CD4-positive, alpha-beta memory T cell (primary cell): ENCODE measurements at regions of chr2 and their contacts with region 1.

Region 1: GRCh38 chr2:168758970-168759820 is 43.2 kb upstream of the NOSTRIN start:
- DNase-seq: peak; percentile 48 to 54 (median 54)
- H3K4me3 ChIP-seq: no peak overlapping the region
- H3K4me3 Mint-ChIP-seq: peak overlapping the region in 1 of 8 donors; percentile 9
- H3K27ac ChIP-seq: no peak overlapping the region
- H3K27ac Mint-ChIP-seq: peak overlapping the region in 2 of 7 donors; percentile 4 to 42
- H3K4me1 ChIP-seq: peaks cover 51% of the 10 kb centered on the region
- H3K4me1 Mint-ChIP-seq: peaks cover 34 to 51% (median 46%) of the 10 kb centered on the region in 4 donors
- H3K27me3 ChIP-seq: no peaks in the 10 kb centered on the region
- H3K27me3 Mint-ChIP-seq: no peaks in the 10 kb centered on the region

Region 2: GRCh38 chr2:168455648-168456520 is 303.3 kb before region 1 on chr2 and contains the start of gene CERS6:
- CTCF ChIA-PET with region 1: no interaction called
- POLR2A ChIA-PET with region 1: no interaction called
- intact Hi-C with region 1: loop called (anchors 5 kb)
- DNase-seq: peak; percentile 47 to 68 (median 59)
- H3K4me3 ChIP-seq: peak within 1 kb of the TSS; percentile 61 to 69
- H3K4me3 Mint-ChIP-seq: peak within 1 kb of the TSS in 5 of 8 donors; percentile 83 to 91 (median 86)
- H3K27ac ChIP-seq: no peak within 1 kb of the TSS
- H3K27ac Mint-ChIP-seq: peak within 1 kb of the TSS in 3 of 7 donors; percentile 22 to 59 (median 43)
- H3K4me1 ChIP-seq: peaks cover 23% of the 10 kb centered on the region
- H3K4me1 Mint-ChIP-seq: peaks cover 25 to 42% (median 33%) of the 10 kb centered on the region in 4 donors
- H3K27me3 ChIP-seq: no peaks in the 10 kb centered on the region
- H3K27me3 Mint-ChIP-seq: no peaks in the 10 kb centered on the region
- total RNA-seq, gene CERS6: 10.1 to 11.3 TPM

Region 3: GRCh38 chr2:168480354-168480753 is 278.8 kb before region 1 on chr2:
- CTCF ChIA-PET with region 1: no interaction called
- POLR2A ChIA-PET with region 1: no interaction called
- intact Hi-C with region 1: loop called (anchors 10 kb)
- DNase-seq: no peak
- H3K4me3 ChIP-seq: no peak overlapping the region
- H3K4me3 Mint-ChIP-seq: no peak overlapping the region
- H3K27ac ChIP-seq: no peak overlapping the region
- H3K27ac Mint-ChIP-seq: peak overlapping the region in 1 of 7 donors; percentile 25
- H3K4me1 ChIP-seq: peaks cover 8% of the 10 kb centered on the region
- H3K4me1 Mint-ChIP-seq: peaks cover 0 to 45% (median 12%) of the 10 kb centered on the region in 4 donors
- H3K27me3 ChIP-seq: no peaks in the 10 kb centered on the region
- H3K27me3 Mint-ChIP-seq: no peaks in the 10 kb centered on the region

Region 4: DNA sequence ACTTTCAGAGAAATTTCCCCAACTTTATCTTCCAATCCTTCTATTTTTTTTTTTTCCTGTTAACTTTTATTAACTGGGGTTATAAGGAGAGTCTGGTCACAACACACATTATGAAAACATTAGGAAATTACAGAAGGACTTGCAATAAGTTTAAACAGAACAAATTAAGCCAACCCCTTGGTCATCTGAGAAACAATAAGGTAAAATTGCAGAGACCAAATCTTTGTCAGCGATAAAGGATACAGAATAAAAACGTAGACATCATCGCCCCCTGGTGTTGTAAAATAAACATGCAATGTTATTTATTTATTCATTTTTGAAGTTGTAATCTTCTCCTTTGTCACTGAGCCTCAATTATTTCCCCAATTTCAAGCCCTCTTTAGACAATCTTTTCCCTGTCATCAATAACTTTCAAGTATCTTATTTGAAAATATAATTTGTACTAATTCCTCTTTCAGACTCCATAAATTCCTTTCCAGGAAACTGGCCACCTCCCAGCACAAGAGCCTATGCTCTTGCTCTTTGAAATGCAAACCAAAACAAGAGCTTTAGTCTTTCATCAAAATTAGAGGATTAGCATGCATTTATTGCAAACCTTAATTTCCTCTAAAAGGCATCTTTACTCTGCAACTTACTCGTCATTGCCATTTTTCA is 161.4 kb after region 1 on chr2:
- CTCF ChIA-PET with region 1: interaction called, 4 read pairs
- POLR2A ChIA-PET with region 1: no interaction called
- intact Hi-C with region 1: loop called (anchors 1 kb)
- DNase-seq: peak in 4 of 5 donors; percentile 34 to 47 (median 43)
- H3K4me3 ChIP-seq: no peak overlapping the region
- H3K4me3 Mint-ChIP-seq: no peak overlapping the region
- H3K27ac ChIP-seq: no peak overlapping the region
- H3K27ac Mint-ChIP-seq: no peak overlapping the region
- H3K4me1 ChIP-seq: peaks cover 10% of the 10 kb centered on the region
- H3K4me1 Mint-ChIP-seq: peaks cover 0 to 8% (median 7%) of the 10 kb centered on the region in 4 donors
- H3K27me3 ChIP-seq: no peaks in the 10 kb centered on the region
- H3K27me3 Mint-ChIP-seq: peaks cover 4 to 24% of the 10 kb centered on the region in 2 donors